Head of caudate nucleus (tissue), 42 donors: ENCODE measurements at regions of chr15 and their contacts with region 1.

Region 1: GRCh38 chr15:30043211-30043655 is 39.5 kb upstream of the GOLGA8J start:
- DNase-seq: peak in 9 of 42 donors; percentile 34 to 58 (median 51)

Region 2: DNA sequence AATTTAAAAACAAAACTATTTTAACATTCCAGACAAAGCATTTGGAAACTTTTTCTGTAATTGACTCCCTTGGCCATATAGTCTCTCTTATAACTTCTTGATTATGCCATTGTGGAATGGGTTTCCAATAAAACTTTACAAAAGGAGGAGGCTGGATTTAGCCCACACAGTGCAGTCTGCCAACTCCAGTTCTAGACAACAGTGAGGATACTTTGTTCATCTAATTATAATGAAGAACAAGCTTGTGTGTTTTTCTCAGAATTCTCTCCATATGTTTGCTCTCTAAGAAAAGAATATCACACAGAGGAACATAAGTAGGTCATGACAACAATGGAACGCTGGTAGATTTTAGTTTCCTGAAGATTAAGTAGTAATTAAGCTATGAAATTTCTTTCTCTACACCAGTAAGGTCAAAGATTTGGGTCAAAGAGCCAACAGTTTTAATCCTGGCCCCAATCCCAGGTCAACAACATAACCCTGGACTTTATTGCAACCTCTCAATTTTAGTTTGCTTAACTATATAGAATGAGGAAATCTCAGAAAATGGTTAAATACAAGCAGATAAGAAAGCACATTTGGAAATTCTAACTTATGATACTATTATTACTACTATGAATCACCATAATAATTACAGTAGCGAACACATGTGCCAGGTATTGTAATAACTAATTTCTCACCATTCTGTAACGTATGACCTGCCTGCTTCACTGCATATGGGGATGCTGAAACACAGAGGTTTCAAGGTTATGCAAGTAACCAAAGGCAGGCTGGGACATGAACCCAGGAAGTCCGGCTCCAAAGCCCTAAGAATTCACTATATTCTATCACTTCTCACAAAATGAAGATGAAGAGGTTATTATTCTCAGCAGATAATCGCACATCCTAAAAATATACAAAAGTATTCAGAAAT is 286.6 kb before region 1 on chr15:
- intact Hi-C with region 1: no loop called
- DNase-seq: peak in 2 of 42 donors; percentile 11 to 38

Region 3: DNA sequence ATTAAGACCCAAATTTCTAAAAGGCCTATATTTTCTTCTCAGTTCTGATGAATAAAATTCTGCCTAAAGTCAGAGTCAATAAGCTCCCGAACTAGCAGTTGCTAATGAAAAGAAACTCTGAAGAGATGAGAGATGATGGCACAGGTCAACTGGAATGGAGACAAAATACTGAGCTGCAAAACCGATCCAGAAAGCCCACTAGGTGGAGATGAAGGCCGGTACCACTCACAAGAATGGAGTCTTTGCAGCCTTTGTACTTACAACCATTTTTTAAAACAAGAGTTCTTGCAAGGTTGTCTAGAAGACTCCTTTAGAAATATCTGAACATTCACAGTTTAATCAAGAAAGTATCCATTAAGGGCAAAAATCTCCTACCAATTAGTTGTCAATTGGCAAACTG is 101.1 kb before region 1 on chr15:
- intact Hi-C with region 1: loop called (anchors 5 kb)
- DNase-seq: peak in 24 of 42 donors; percentile 33 to 81 (median 58)